ENCODE measurements at regions of chr20 and their contacts with region 1.

Region 1: DNA sequence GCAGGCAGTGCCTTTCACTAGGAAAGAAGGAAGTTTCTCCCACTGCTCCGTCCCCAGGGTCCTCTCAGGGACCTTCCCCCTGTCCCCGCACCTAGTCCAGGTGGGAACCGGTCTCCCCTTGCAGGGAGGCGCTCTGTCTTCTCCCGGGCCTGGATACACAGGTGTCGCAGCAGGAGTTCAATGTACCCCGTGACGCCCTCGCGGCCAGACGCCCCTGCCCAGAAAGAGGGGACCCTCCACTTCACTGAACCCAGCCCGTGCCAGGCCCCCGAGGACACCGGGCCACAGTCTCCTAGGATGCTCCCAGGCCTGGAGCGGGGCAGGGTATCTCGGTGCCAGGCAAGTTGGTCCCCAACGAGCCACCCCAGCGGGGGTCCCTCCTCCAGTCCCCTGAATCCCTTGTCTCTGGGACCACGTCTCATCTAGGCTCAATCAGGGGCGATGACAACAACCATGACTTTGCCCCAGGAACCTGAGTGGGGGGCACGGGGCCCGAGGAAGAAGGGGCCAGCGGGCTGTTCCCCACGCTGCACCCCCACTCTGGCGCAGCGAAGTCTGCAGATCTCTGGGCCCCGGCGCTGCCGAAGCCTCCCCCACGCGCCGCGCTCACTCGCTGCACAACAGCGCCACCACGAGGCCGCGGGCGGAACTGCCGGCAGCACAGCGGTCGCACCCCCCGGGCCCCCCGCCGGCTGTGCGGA is 103.0 kb downstream of the EDN3 start:
- DNase-seq: peak; percentile 72
- H3K4me3 Mint-ChIP-seq: no peak overlapping the region
- H3K27ac Mint-ChIP-seq: no peak overlapping the region
- H3K4me1 Mint-ChIP-seq: peaks cover 2% of the 10 kb centered on the region
- H3K27me3 Mint-ChIP-seq: peaks cover 8% of the 10 kb centered on the region

Region 2: DNA sequence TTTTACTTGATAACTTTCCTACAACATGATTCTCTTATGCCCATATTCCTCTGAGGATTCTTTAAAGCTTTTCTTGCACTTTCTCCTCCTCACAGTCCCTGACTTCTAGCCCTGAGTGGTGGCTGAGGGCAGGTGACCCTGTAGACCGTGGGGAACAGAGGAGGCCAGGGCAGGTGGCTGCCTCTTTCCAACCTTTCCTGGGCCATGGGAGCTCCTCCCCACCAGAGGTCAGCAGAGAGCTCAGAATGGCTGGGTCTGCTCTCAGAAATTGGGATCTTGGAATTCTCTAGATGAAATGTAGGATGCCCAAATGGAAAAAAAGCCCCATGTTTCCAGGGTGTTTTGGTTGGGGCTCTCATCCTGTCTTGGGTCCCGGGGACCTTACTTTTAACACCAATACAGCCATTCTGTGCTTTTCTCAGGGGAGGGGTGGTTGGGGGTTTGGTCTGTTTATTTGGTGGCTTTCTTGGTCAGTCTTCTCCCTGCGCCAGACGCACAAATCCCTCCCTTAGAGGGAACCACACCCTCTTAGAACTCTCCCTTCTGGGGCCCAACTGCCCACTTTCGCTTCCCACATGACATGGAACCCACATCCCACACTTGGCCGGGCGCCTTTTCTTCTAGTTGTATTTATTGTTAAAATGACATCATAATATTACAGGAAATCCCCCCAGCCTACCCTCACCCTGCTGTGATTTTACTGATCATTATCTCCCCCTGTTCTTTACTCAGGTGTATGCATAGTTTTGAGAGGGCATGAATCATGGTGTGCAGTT is 533.0 kb before region 1 on chr20:
- CTCF ChIA-PET with region 1: interaction called, 8 read pairs
- intact Hi-C with region 1: loop called (anchors 2 kb)
- DNase-seq: peak; percentile 67
- H3K4me3 Mint-ChIP-seq: no peak overlapping the region
- H3K27ac Mint-ChIP-seq: no peak overlapping the region
- H3K4me1 Mint-ChIP-seq: peaks cover 4% of the 10 kb centered on the region
- H3K27me3 Mint-ChIP-seq: no peaks in the 10 kb centered on the region

Region 3: DNA sequence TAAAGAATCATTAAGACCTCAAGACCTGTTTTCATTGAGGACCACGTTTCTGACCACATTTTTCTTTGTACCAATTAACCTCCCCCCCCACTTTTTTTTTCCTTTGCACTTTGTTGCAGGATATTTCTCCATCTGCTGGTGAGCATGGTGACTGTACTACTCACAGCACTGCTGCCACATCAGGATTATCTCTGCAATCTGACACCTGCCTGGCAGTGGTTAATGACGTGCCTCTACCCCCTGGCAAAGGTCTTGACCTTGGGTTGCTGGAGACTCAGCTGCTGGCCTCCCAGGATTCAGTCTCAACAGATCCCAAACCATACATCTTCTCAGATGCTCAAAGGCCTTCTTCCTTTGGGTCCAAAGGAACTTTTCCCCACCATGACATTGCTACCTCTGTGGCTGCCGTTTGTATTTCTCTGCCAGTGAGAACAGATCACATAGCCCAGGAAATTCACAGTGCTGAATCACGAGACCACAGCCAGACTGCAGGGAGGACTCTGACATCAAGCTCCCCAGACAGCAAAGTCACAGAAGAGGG is 149.6 kb before region 1 on chr20:
- CTCF ChIA-PET with region 1: interaction called, 3 read pairs
- intact Hi-C with region 1: loop called (anchors 1 kb)
- DNase-seq: peak; percentile 64
- H3K4me3 Mint-ChIP-seq: peak overlapping the region; percentile 16
- H3K27ac Mint-ChIP-seq: peak overlapping the region; percentile 92
- H3K4me1 Mint-ChIP-seq: peaks cover 50% of the 10 kb centered on the region
- H3K27me3 Mint-ChIP-seq: no peaks in the 10 kb centered on the region

Region 4: DNA sequence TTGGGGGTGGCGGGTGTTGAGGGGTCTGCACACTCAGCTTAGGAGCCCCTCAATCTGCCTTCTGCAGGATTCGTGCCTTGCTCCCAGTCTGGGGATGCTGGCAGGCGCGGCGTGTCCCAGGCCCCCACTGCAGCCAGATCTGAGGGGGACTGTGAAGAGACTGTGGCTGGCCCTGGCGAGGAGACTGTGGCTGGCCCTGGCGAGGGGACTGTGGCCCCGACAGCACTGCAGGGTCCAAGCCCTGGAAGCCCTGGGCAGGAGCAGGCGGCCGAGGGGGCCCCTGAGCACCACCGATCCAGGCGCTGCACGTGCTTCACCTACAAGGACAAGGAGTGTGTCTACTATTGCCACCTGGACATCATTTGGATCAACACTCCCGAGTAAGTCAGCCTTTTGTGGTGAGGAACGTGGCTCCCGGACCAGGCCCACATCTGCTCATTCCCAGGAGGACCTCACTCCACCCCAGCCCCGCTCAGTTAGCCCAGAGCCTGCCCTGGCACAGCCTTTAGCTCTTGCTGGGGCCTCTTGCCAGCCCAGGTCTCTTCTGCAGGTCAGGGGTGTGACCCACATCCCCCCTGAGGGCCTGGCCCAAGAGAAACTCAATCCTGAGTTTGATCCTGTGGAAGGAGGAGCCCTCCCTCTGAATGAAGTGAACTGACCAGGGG is 101.9 kb before region 1 on chr20:
- CTCF ChIA-PET with region 1: no interaction called
- intact Hi-C with region 1: no loop called
- DNase-seq: no peak
- H3K4me3 Mint-ChIP-seq: no peak overlapping the region
- H3K27ac Mint-ChIP-seq: no peak overlapping the region
- H3K4me1 Mint-ChIP-seq: peaks cover 2% of the 10 kb centered on the region
- H3K27me3 Mint-ChIP-seq: peaks cover 14% of the 10 kb centered on the region

Region 5: DNA sequence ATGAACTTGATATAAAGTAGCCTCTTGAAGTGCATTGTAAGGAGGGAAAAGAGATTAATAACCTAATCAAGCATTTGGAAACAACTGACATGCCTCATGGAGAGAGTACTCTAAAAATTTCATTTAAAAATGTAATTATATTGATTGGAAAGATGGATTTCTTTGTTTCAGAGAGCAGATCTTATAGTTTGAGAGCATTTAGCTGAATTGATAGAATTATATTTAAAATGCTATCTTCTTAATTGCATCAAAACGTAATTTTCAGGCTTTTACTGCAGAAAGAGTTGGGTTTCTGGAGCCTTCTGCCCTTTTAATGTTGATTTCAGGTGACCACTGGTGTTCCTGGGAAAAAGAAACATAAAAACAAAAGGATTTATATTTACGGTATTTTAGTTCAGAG is 27.6 kb after region 1 on chr20:
- CTCF ChIA-PET with region 1: no interaction called
- intact Hi-C with region 1: no loop called
- DNase-seq: no peak
- H3K4me3 Mint-ChIP-seq: no peak overlapping the region
- H3K27ac Mint-ChIP-seq: no peak overlapping the region
- H3K4me1 Mint-ChIP-seq: peaks cover 10% of the 10 kb centered on the region
- H3K27me3 Mint-ChIP-seq: no peaks in the 10 kb centered on the region

Measured in activated naive CD4-positive, alpha-beta T cell treated with anti-CD3 and anti-CD28 coated beads for 36 hours (primary cell).